A549 (cell line): ENCODE measurements at regions of chr7 and their contacts with region 1.

Region 1: DNA sequence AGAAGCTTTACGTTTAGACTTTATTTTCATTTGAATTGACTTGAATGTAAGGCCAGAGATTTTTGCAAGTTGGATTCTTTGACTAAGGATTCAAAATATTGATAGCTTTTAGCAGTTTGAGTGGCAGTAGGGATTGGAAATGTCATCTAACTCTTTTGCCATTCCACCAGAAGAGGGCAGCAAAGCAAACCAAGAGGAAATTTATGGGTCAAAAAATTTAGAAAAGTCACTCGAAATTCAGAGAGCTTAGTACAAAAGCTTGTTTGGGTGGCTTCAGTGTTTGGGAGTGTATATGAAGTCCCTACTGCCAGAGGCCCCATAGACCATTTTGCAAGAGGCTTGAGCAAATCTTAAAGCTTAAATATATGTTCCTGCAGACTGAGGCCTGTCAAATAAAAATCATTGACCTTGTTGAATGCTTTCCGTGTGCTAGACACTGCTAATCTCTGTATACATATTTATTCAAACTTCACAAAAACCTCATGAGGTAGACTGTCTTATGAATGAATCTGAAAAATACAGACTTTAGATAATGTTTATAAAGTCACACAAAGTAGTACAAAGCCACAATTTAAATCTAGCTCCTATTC is 44.6 kb upstream of the RSBN1L start:
- DNase-seq: peak; percentile 32 to 43
- ATAC-seq: peak in 1 of 2 experiments; percentile 45; a peak in 2 of 6 replicates
- H3K4me3 ChIP-seq: no peak overlapping the region
- H3K27ac ChIP-seq: peak overlapping the region; percentile 15 to 23; a peak in 2 of 6 replicates
- H3K4me1 ChIP-seq: peaks cover 30% of the 10 kb centered on the region
- CTCF ChIP-seq: peak; percentile 76
- EP300 ChIP-seq: no peak
- POLR2A ChIP-seq: no peak
- RAD21 ChIP-seq: peak; percentile 54 to 57

Region 2: DNA sequence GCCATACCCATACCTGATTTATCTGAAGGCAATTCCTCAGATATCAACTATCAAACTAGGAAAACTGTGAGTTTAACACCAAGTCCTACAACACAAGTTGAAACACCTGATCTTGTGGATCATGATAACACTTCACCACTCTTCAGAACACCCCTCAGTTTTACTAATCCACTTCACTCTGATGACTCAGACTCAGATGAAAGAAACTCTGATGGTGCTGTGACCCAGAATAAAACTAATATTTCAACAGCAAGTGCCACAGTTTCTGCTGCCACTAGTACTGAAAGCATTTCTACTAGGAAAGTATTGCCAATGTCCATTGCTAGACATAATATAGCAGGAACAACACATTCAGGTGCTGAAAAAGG is 24.4 kb before region 1 on chr7:
- CTCF ChIA-PET with region 1: interaction called, 10 read pairs
- POLR2A ChIA-PET with region 1: no interaction called
- DNase-seq: no peak
- ATAC-seq: peak in 1 of 2 experiments; percentile 65; a peak in 2 of 6 replicates
- H3K4me3 ChIP-seq: no peak overlapping the region
- H3K27ac ChIP-seq: peak overlapping the region in 1 of 2 experiments; percentile 40; a peak in 1 of 6 replicates
- H3K4me1 ChIP-seq: peaks cover 20% of the 10 kb centered on the region; the same call in 2 of the 3 replicates
- CTCF ChIP-seq: no peak
- EP300 ChIP-seq: no peak
- POLR2A ChIP-seq: no peak
- RAD21 ChIP-seq: no peak

Region 3: DNA sequence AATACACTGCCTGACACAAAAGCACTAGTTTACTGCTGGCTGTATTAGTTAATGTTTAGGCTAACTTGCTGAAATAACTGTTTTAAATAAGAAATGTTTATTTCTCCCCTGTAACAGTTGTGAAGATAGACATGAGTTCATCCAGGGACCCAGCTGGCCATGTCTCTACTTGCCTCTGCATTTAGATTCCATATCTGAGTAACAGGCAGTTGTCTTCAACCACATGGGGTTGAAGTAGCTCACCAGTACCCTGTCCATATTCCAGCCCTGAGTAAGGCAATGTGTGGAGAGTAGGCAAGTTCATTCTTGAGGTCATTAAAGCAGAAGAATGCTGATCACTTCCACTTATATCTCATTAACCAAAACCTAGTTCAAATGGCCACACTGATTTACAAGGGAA is 13.5 kb after region 1 on chr7:
- CTCF ChIA-PET with region 1: interaction called, 16 read pairs
- POLR2A ChIA-PET with region 1: no interaction called
- DNase-seq: no peak
- ATAC-seq: no peak
- H3K4me3 ChIP-seq: no peak overlapping the region
- H3K27ac ChIP-seq: peak overlapping the region in 1 of 2 experiments; percentile 19; a peak in 1 of 6 replicates
- H3K4me1 ChIP-seq: peaks cover 2% of the 10 kb centered on the region; the same call in 1 of the 3 replicates
- CTCF ChIP-seq: no peak
- EP300 ChIP-seq: no peak
- POLR2A ChIP-seq: no peak
- RAD21 ChIP-seq: no peak

Region 4: GRCh38 chr7:77696198-77697028 is 44.7 kb after region 1 on chr7 and contains the start of gene RSBN1L:
- CTCF ChIA-PET with region 1: interaction called, 11 read pairs
- POLR2A ChIA-PET with region 1: no interaction called
- DNase-seq: peak; percentile 89 to 96
- ATAC-seq: peak; percentile 98
- H3K4me3 ChIP-seq: peak within 1 kb of the TSS; percentile 88
- H3K27ac ChIP-seq: peak within 1 kb of the TSS; percentile 93
- H3K4me1 ChIP-seq: peaks cover 16% of the 10 kb centered on the region; the same call in 2 of the 3 replicates
- CTCF ChIP-seq: no peak
- EP300 ChIP-seq: no peak
- POLR2A ChIP-seq: peak; percentile 62
- RAD21 ChIP-seq: no peak
- polyA plus RNA-seq, gene RSBN1L: 10.5 and 13.0 TPM in 2 replicates